PC-9 (cell line): ENCODE measurements at regions of chr2 and their contacts with region 1.

Region 1: GRCh38 chr2:160194946-160195345 is 5.1 kb downstream of the ITGB6 start:
- DNase-seq: no peak
- H3K4me3 ChIP-seq: no peak overlapping the region
- H3K27ac ChIP-seq: 0 out of 2 replicates have a peak overlapping the region, but pooled peaks have one; percentile 9
- H3K4me1 ChIP-seq: peaks cover 27% of the 10 kb centered on the region
- H3K27me3 ChIP-seq: no peaks in the 10 kb centered on the region
- CTCF ChIP-seq: no peak

Region 2: DNA sequence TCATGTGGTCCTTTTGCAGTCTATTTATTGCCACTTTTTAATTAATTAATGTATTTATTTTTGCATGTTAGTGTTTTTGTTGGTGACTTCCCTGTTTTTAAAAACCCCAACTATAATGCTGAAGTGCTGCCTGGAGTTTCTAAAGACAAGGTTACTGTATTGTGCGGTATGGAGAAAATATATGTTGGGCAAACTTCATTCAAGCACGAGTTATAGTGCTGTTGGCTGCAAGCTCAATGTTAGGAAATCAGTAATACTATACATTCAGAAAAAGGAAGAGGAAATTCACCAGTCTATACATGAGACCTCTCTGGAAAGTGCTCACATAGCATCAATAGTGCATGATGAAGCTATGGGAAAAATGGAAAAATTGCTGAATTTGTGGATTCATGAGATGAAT is 314.1 kb after region 1 on chr2:
- CTCF ChIA-PET with region 1: no interaction called
- POLR2A ChIA-PET with region 1: interaction called, 10 read pairs
- intact Hi-C with region 1: no loop called
- DNase-seq: no peak
- H3K4me3 ChIP-seq: no peak overlapping the region
- H3K27ac ChIP-seq: no peak overlapping the region
- H3K4me1 ChIP-seq: no peaks in the 10 kb centered on the region
- H3K27me3 ChIP-seq: no peaks in the 10 kb centered on the region
- CTCF ChIP-seq: no peak

Region 3: GRCh38 chr2:160590664-160591063 is 395.7 kb after region 1 on chr2:
- CTCF ChIA-PET with region 1: no interaction called
- POLR2A ChIA-PET with region 1: no interaction called
- intact Hi-C with region 1: no loop called
- DNase-seq: no peak
- H3K4me3 ChIP-seq: no peak overlapping the region
- H3K27ac ChIP-seq: no peak overlapping the region
- H3K4me1 ChIP-seq: no peaks in the 10 kb centered on the region
- H3K27me3 ChIP-seq: no peaks in the 10 kb centered on the region
- CTCF ChIP-seq: no peak